Activated CD4-positive, alpha-beta T cell treated with anti-CD3 and anti-CD28 coated beads, Interleukin-2, amount 10 ng/mL, durations not matched to agents 7 days and 5 days (primary cell): ENCODE measurements at regions of chr2 and their contacts with region 1.

Region 1: DNA sequence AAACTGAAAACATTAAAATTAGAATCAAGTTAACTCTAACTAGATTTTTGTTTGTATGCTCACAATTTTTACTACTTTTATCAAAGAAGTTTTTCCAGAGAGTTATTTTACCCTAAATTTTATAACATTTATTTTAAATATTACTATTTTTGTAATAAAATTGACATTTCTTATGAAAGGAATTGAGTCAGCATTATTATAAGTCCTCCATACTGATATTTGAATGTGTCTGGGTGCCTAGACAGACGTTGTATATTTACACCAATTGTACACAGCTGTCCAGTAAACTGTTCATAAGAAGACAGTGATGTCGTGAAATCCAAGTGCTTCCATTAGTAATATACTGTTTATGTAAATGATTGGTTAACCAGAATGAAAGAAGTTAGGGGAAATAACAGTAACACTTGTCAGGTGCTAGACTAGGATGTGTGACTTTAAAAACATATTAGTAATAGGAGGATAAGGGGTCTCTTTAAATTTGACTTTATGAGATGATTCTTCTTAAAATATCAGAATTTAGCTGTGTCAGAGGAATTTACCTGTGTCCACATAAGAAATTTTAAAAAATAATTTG is 73.7 kb downstream of the TANK start:
- DNase-seq: no peak
- H3K4me3 Mint-ChIP-seq: no peak overlapping the region
- H3K27ac Mint-ChIP-seq: no peak overlapping the region
- H3K4me1 Mint-ChIP-seq: peaks cover 24% of the 10 kb centered on the region
- H3K27me3 Mint-ChIP-seq: peaks cover 2% of the 10 kb centered on the region

Region 2: GRCh38 chr2:160901613-160902012 is 332.3 kb before region 1 on chr2:
- CTCF ChIA-PET with region 1: no interaction called
- POLR2A ChIA-PET with region 1: no interaction called
- DNase-seq: no peak
- H3K4me3 Mint-ChIP-seq: no peak overlapping the region
- H3K27ac Mint-ChIP-seq: no peak overlapping the region
- H3K4me1 Mint-ChIP-seq: no peaks in the 10 kb centered on the region
- H3K27me3 Mint-ChIP-seq: peaks cover 1% of the 10 kb centered on the region

Region 3: DNA sequence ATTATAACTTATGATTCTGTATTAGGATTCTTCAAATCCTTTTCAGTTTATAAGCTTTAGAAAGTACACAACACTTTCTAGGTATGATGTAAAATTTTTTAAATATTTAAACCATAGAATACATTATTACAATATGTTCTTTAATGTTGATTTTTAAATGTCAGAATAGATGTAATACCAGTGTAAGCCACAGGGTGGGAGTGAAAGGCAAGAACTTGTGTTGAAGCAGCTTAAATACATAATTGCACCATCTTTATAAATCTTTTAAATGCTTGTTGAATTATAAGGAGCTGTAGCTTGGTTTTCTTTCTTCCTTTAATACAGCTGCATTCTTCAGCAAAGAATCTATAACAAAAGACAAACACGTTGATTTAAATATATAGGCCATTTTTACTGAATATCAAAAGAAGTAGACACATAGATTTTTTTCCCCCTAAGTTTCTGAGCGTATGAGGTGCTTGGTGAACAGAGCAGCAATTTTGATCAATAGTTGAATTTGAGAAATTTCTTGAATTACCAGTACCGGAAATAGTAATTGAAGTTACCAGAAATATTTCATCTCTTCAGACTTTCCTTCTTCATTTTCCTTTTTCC is 10.7 kb before region 1 on chr2:
- CTCF ChIA-PET with region 1: interaction called, 11 read pairs
- POLR2A ChIA-PET with region 1: interaction called, 3 read pairs
- DNase-seq: peak; percentile 46
- H3K4me3 Mint-ChIP-seq: no peak overlapping the region
- H3K27ac Mint-ChIP-seq: no peak overlapping the region
- H3K4me1 Mint-ChIP-seq: peaks cover 2% of the 10 kb centered on the region
- H3K27me3 Mint-ChIP-seq: no peaks in the 10 kb centered on the region